Common myeloid progenitor, CD34-positive (primary cell): ENCODE measurements at regions of chr1 and their contacts with region 1.

Region 1: DNA sequence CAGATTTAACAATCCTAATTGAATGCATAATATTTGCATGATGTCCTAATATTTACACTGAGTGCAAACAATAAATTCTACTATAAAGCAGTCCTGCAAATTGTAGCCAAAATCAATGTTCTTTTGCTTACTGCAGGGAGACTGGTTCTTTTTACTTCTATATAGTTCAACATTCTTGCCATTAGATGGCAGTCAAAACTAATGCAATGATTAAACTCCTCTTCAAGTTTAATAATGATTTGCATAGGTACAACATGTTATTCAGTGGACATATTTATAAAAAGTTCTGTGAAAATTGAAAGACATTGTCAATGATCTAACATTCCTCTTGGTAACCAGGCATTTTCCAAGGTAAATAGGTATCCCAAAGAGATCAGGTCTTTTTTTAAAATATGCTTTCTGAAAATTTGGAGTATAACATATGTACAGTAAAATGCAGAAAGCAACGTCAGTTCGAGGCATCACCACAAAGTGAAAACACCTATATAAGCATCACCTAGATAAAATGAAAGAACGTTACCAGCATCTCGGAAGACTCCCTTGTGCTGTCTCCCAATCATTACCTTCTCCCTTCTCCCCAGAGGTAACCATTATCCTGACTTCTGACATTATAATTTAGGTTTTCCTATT is 9.8 kb upstream of the FNBP1L start:
- DNase-seq: peak; percentile 49 to 81 (median 78)
- H3K4me3 ChIP-seq: no peak overlapping the region
- H3K27ac ChIP-seq: no peak overlapping the region
- H3K4me1 ChIP-seq: no peaks in the 10 kb centered on the region
- H3K27me3 ChIP-seq: peaks cover 0 to 3% (median 0%) of the 10 kb centered on the region in 5 experiments

Region 2: GRCh38 chr1:93080179-93080823 is 357.8 kb before region 1 on chr1:
- CTCF ChIA-PET with region 1: no interaction called
- POLR2A ChIA-PET with region 1: no interaction called
- DNase-seq: peak; percentile 77 to 89 (median 84)
- H3K4me3 ChIP-seq: peak overlapping the region; percentile 81 to 100 (median 94)
- H3K27ac ChIP-seq: peak overlapping the region; percentile 97 to 98
- H3K4me1 ChIP-seq: peaks cover 7 to 41% (median 21%) of the 10 kb centered on the region in 4 experiments
- H3K27me3 ChIP-seq: no peaks in the 10 kb centered on the region

Region 3: GRCh38 chr1:93846211-93846991 is 408.3 kb after region 1 on chr1:
- CTCF ChIA-PET with region 1: interaction called, 19 read pairs
- POLR2A ChIA-PET with region 1: no interaction called
- DNase-seq: peak; percentile 80 to 90 (median 85)
- H3K4me3 ChIP-seq: peak overlapping the region; percentile 84 to 98 (median 87)
- H3K27ac ChIP-seq: peak overlapping the region; percentile 50 to 83
- H3K4me1 ChIP-seq: peaks cover 8 to 36% (median 24%) of the 10 kb centered on the region in 4 experiments
- H3K27me3 ChIP-seq: no peaks in the 10 kb centered on the region